ENCODE measurements at regions of chr7 and their contacts with region 1.

Region 1: GRCh38 chr7:36303202-36304098 is 86.2 kb upstream of the ANLN start:
- DNase-seq: peak; percentile 92
- H3K4me3 ChIP-seq: no peak overlapping the region
- CTCF ChIP-seq: no peak

Region 2: DNA sequence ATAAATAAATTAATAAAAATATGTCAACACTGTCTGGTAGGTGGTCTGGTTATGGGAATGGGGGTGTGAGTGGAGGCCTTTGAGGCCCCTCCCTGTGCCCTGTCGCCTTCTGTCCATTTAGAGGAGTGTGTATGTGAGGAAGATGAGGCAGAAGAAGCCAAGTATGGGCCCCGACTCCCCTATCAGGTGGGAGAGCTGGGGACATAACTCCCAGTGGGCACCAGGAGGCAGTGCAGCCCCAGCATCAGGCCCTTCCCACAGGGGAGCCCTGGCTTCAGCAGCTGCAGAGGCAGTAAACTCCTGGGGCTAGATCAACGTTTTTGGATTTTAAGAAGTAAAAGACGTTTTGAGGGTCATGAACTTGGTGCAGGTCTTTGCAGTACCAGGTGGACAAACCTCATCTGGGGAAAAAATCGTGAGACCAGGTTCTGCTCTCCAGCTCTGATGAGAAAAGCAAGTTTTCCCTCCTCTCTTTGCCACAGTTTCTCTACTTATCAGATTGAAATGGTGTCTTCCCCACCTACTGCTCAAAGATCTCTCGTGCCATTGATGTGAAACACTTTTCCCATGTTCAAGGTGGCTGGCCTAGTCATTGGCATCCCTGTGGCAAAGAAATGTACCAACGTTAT is 318.2 kb before region 1 on chr7:
- in situ Hi-C with region 1: loop called (anchors 25 kb)
- DNase-seq: peak; percentile 68
- H3K4me3 ChIP-seq: no peak overlapping the region
- CTCF ChIP-seq: peak; percentile 93